PC-9 (cell line): ENCODE measurements at regions of chr9 and their contacts with region 1.

Region 1: DNA sequence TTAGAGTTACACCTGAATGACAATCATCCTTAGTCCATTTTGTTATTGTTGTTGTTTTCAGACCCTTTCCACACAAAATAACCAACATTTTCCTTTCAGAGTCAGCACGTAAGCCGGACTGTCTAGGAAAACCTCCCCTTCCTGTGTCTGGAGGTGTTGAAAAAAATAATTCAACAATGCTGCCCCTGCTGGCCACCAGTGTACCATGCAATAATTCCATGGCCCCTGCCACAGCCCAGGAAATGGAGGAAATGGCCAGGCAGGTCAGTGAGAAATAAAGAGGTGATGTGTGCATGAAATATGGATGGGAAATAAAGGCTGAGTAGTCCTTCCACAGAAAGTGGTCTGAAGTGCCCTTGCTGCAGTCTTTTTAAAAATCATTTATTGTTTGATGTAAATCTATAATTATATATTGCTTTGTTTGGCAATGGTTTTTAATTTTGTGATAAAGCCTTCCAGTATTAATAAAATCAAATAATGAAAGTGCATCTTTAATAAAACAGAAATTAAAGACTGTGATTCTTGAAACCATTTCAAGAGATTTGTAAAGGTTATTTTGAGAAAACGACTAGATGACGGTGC is 152.8 kb upstream of the PAPPA start:
- DNase-seq: no peak
- H3K4me3 ChIP-seq: no peak overlapping the region
- H3K27ac ChIP-seq: no peak overlapping the region
- H3K4me1 ChIP-seq: peaks cover 69% of the 10 kb centered on the region
- H3K27me3 ChIP-seq: no peaks in the 10 kb centered on the region
- CTCF ChIP-seq: peak; percentile 53; the same call in 1 of the 2 replicates

Region 2: DNA sequence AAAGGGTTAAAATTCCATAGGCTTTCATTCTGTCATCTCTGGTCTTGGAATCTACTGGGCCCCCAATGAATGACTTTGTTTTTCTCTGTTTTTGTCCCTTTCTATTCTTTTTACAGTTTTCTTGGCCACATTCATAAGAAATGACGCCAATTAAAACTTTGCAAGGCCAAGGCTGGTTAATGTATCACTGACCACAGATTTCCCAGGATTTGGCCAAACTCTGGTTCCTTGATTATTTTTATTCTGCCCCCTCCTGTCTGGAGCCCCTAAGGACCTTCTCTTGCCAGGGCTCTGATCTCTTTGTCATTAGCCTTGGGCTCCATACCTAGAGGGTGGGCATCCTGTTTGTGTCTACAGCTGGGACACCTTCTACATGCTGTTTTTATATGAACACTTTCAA is 236.2 kb before region 1 on chr9:
- CTCF ChIA-PET with region 1: no interaction called
- POLR2A ChIA-PET with region 1: no interaction called
- intact Hi-C with region 1: no loop called
- DNase-seq: no peak
- H3K4me3 ChIP-seq: no peak overlapping the region
- H3K27ac ChIP-seq: no peak overlapping the region
- H3K4me1 ChIP-seq: no peaks in the 10 kb centered on the region
- H3K27me3 ChIP-seq: no peaks in the 10 kb centered on the region
- CTCF ChIP-seq: no peak

Region 3: GRCh38 chr9:115952430-115953316 is 48.2 kb before region 1 on chr9:
- CTCF ChIA-PET with region 1: no interaction called
- POLR2A ChIA-PET with region 1: no interaction called
- intact Hi-C with region 1: loop called (anchors 10 kb)
- DNase-seq: peak in 1 of 2 experiments; percentile 65
- H3K4me3 ChIP-seq: no peak overlapping the region
- H3K27ac ChIP-seq: peak overlapping the region; percentile 36
- H3K4me1 ChIP-seq: peaks cover 18% of the 10 kb centered on the region
- H3K27me3 ChIP-seq: no peaks in the 10 kb centered on the region
- CTCF ChIP-seq: no peak

Region 4: DNA sequence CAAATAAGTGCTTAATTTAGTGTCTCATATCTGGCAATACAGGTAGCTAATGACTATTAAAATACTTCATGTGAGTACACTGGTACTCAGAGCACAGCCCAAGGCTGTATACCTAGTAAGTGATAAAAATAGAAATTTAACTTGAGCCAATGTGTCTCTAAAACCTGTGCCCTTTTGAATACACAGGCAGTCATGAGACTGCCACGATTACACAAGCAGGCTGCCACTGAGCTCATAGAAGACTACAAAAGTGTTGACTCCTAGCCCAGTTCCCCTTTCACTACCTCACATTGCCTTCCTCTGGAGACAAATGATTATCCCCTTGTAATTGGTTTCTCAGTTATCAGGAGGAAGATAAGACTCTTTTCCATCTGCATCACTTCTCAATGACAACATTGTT is 86.4 kb after region 1 on chr9:
- CTCF ChIA-PET with region 1: no interaction called
- POLR2A ChIA-PET with region 1: no interaction called
- intact Hi-C with region 1: loop called (anchors 5 kb)
- DNase-seq: peak in 1 of 2 experiments; percentile 54
- H3K4me3 ChIP-seq: no peak overlapping the region
- H3K27ac ChIP-seq: peak overlapping the region; percentile 82
- H3K4me1 ChIP-seq: peaks cover 17% of the 10 kb centered on the region
- H3K27me3 ChIP-seq: no peaks in the 10 kb centered on the region
- CTCF ChIP-seq: no peak

Region 5: GRCh38 chr9:116288658-116289057 is 287.8 kb after region 1 on chr9:
- CTCF ChIA-PET with region 1: no interaction called
- POLR2A ChIA-PET with region 1: no interaction called
- intact Hi-C with region 1: loop called (anchors 10 kb)
- DNase-seq: peak; percentile 66 to 69
- H3K4me3 ChIP-seq: no peak overlapping the region
- H3K27ac ChIP-seq: no peak overlapping the region
- H3K4me1 ChIP-seq: no peaks in the 10 kb centered on the region
- H3K27me3 ChIP-seq: no peaks in the 10 kb centered on the region
- CTCF ChIP-seq: no peak

Region 6: DNA sequence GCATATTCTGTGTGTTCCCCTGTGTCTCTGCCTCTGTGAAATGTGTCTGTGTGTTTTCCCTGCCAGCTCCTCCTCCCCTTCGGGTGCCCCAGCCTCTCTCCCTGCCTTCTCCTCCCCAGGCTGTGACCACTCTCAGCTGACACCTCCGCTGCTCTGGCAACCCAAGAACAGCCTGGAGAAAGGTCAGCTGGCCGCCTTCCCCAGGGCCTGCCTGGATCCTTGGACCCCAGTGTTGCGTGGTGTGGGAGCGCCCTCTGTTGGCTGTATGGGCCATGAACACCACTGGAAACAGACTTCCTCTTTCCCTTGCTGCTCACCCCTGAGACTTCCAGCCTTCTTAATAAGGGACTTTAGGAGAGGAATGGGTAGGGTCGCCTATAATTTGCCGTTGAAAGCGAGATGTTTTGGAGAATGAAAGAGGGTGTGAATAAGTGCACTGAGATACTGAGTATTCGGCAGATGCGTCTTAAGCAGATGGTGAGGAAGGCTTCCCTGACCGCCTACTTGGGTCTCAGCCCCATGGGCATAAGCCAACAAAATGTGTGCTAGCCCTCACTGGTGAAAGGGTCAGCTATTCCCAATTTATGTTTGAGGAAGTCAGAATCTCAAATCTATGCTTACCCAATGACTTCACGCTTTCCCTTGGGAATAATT is 571.4 kb after region 1 on chr9:
- CTCF ChIA-PET with region 1: no interaction called
- POLR2A ChIA-PET with region 1: no interaction called
- intact Hi-C with region 1: loop called (anchors 10 kb)
- DNase-seq: peak; percentile 57 to 75
- H3K4me3 ChIP-seq: no peak overlapping the region
- H3K27ac ChIP-seq: no peak overlapping the region
- H3K4me1 ChIP-seq: peaks cover 15% of the 10 kb centered on the region; the same call in 1 of the 2 replicates
- H3K27me3 ChIP-seq: no peaks in the 10 kb centered on the region
- CTCF ChIP-seq: peak; percentile 94